Calu3 (cell line): ENCODE measurements at regions of chr5 and their contacts with region 1.

Region 1: DNA sequence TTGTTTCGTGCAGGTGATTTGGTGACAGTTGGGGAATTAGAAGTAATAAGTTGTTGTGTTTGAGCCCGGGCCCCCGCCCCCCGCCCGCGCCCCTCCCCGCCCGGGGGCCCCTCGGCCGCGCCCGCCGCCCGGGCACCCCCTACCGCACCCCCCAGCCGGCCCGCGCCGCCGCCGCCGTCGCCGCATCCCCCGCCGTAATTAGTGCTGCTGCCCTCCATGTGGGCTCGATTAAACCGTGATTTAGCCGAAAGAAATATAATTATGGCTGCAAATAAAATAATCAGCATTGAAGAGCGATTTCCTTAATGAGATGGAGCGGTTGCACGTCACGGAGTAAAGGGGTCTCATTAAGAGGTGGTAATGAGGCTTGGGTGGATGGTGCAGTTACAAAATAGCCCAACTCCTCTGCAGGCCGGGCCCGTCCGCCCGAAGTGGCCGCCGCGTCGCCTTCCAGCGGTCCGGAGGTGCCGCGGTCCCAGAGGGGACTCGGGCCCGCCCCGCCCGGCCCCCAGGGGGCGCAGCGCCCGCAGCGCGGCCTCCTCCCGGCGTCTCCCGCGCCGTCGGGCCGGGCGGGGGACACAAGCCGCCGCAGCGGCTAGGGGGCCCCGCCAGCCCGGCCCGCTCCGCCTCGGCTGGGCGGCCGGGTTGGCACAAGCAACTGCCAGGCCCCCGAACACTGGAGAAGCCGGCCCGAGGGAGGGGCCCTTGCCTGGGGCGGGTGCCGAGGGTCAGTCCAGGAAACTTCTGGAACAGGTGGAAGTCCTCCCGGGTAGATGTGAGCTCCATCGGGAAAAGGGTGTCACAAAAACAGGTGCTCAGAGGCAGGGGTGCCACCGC is 6.9 kb upstream of the OTP start:
- DNase-seq: peak; percentile 84
- H3K4me3 Mint-ChIP-seq: peak overlapping the region; percentile 49
- H3K27ac Mint-ChIP-seq: no peak overlapping the region
- H3K4me1 Mint-ChIP-seq: no peaks in the 10 kb centered on the region
- H3K27me3 Mint-ChIP-seq: peaks cover 96% of the 10 kb centered on the region
- CTCF ChIP-seq: peak; percentile 58

Region 2: DNA sequence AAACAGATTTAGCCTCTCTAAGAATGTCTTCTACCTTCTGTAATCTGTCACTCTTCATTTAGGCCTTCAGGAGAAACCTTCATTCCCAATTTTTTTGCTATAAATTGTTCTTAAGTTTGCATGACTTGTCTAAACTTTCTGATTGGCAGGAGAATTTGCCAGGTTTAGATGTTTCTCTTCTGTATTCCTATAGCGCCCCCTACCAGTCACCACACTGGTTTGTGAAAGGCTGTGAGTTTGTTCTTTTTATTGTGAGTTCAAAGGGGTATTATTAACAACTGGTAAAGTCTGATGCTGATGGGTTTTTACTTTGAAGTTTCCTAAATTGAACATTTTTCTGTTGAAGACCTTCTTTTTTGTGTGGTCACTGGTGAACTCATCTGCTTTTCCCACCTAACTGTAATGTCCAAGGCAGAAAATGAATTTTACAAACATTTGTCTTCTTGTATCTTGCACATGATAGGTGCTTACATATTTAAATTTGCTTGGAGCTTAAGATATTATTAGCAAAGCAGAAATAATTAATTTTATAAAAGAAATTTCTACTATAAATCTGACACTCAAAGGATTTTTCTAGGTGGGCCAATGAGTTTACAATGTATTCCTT is 1003.8 kb before region 1 on chr5:
- CTCF ChIA-PET with region 1: no interaction called
- intact Hi-C with region 1: no loop called
- DNase-seq: peak; percentile 72
- H3K4me3 Mint-ChIP-seq: no peak overlapping the region
- H3K27ac Mint-ChIP-seq: no peak overlapping the region
- H3K4me1 Mint-ChIP-seq: no peaks in the 10 kb centered on the region
- H3K27me3 Mint-ChIP-seq: no peaks in the 10 kb centered on the region
- CTCF ChIP-seq: peak; percentile 61

Region 3: DNA sequence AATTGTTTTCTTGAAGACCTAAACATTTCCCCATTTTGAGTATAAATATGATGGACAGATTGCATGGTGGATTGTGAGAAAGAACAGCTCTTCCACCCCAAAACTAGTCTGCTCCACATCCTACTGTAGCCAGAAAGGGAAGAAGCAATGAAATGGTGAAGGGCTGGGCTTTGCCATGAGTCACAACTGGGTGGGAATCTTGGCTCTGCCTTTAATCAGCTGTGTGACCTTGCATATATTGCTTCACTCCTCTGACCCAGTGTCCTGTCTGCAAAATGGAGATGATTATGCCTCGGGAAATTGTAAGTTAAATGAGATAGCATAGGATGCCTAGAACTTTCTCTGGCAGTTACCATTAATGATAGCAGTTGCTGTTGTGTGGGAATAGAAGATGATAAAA is 333.0 kb before region 1 on chr5:
- CTCF ChIA-PET with region 1: no interaction called
- intact Hi-C with region 1: no loop called
- DNase-seq: no peak
- H3K4me3 Mint-ChIP-seq: no peak overlapping the region
- H3K27ac Mint-ChIP-seq: no peak overlapping the region
- H3K4me1 Mint-ChIP-seq: no peaks in the 10 kb centered on the region
- H3K27me3 Mint-ChIP-seq: peaks cover 13% of the 10 kb centered on the region
- CTCF ChIP-seq: no peak

Region 4: GRCh38 chr5:78008356-78008967 is 363.1 kb after region 1 on chr5:
- CTCF ChIA-PET with region 1: no interaction called
- intact Hi-C with region 1: loop called (anchors 10 kb)
- DNase-seq: peak; percentile 29
- H3K4me3 Mint-ChIP-seq: no peak overlapping the region
- H3K27ac Mint-ChIP-seq: no peak overlapping the region
- H3K4me1 Mint-ChIP-seq: peaks cover 12% of the 10 kb centered on the region
- H3K27me3 Mint-ChIP-seq: no peaks in the 10 kb centered on the region
- CTCF ChIP-seq: peak; percentile 71

Region 5: GRCh38 chr5:78204240-78204639 is 558.9 kb after region 1 on chr5:
- CTCF ChIA-PET with region 1: no interaction called
- intact Hi-C with region 1: no loop called
- DNase-seq: no peak
- H3K4me3 Mint-ChIP-seq: no peak overlapping the region
- H3K27ac Mint-ChIP-seq: no peak overlapping the region
- H3K4me1 Mint-ChIP-seq: peaks cover 16% of the 10 kb centered on the region
- H3K27me3 Mint-ChIP-seq: no peaks in the 10 kb centered on the region
- CTCF ChIP-seq: no peak